Caco-2 (cell line): ENCODE measurements at regions of chr11 and their contacts with region 1.

Region 1: GRCh38 chr11:48172818-48173609 is 43.6 kb upstream of the OR4B1 start:
- DNase-seq: peak; percentile 70 to 82
- H3K4me3 ChIP-seq: no peak overlapping the region
- H3K4me3 Mint-ChIP-seq: no peak overlapping the region
- H3K27ac Mint-ChIP-seq: no peak overlapping the region
- H3K4me1 ChIP-seq: no peaks in the 10 kb centered on the region
- H3K4me1 Mint-ChIP-seq: no peaks in the 10 kb centered on the region
- H3K27me3 ChIP-seq: no peaks in the 10 kb centered on the region
- H3K27me3 Mint-ChIP-seq: peaks cover 3% of the 10 kb centered on the region
- CTCF ChIP-seq: peak; percentile 96 to 97

Region 2: DNA sequence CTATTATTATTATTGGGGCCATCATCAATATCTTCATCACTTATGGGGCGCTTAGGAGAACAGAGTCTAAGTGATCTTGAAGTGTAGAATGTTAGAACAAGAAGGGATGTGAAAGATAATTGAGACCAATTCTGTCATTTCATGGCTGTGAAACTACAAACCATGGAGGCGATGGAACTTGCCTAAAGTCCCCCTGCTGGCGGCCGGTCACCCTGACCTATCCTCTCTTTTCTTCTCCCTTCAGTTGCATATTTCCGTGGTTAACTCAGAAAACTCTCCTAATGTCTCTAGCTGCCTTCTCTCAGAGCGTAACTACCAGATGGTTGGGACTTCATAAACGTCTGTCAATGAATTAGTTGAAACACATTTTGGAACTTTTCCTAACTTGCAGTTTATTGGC is 37.0 kb after region 1 on chr11:
- CTCF ChIA-PET with region 1: no interaction called
- POLR2A ChIA-PET with region 1: no interaction called
- intact Hi-C with region 1: loop called (anchors 1 kb)
- DNase-seq: peak in 1 of 2 experiments; percentile 42
- H3K4me3 ChIP-seq: no peak overlapping the region
- H3K4me3 Mint-ChIP-seq: no peak overlapping the region
- H3K27ac Mint-ChIP-seq: no peak overlapping the region
- H3K4me1 ChIP-seq: no peaks in the 10 kb centered on the region
- H3K4me1 Mint-ChIP-seq: no peaks in the 10 kb centered on the region
- H3K27me3 ChIP-seq: no peaks in the 10 kb centered on the region
- H3K27me3 Mint-ChIP-seq: peaks cover 4% of the 10 kb centered on the region
- CTCF ChIP-seq: peak; percentile 38 to 52

Region 3: DNA sequence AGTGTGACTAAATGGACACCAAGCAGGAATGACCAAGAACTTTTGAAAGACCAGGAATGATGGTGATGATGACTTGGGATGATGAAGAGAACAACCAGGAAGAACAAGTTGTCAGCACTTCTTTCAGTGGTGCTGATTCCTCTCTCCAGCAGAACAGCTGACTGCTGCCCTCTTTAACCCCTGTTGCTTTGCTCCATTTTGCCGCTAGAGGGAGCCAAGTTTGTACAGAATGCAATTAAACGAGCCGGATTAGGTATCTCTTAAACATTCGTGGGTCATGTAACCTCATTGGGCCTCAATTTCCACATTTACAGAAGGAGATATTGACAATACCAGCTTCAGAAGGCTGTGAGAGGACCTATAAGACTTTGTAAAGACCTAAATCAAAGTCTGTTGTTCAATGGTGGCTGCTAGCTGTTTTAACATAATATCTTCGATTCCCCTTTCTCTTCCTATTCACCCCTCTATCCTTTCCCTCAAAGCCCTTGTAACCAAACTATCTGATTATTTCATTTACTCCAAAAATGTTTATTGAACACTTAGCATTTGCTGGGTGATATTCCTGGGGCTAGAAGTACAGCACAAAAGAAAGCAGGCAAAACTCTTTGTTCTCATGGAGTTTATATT is 134.9 kb after region 1 on chr11:
- CTCF ChIA-PET with region 1: no interaction called
- POLR2A ChIA-PET with region 1: no interaction called
- intact Hi-C with region 1: loop called (anchors 1 kb)
- DNase-seq: peak; percentile 63 to 78
- H3K4me3 ChIP-seq: no peak overlapping the region
- H3K4me3 Mint-ChIP-seq: no peak overlapping the region
- H3K27ac Mint-ChIP-seq: no peak overlapping the region
- H3K4me1 ChIP-seq: no peaks in the 10 kb centered on the region
- H3K4me1 Mint-ChIP-seq: no peaks in the 10 kb centered on the region
- H3K27me3 ChIP-seq: no peaks in the 10 kb centered on the region
- H3K27me3 Mint-ChIP-seq: no peaks in the 10 kb centered on the region
- CTCF ChIP-seq: peak; percentile 85 to 92

Region 4: DNA sequence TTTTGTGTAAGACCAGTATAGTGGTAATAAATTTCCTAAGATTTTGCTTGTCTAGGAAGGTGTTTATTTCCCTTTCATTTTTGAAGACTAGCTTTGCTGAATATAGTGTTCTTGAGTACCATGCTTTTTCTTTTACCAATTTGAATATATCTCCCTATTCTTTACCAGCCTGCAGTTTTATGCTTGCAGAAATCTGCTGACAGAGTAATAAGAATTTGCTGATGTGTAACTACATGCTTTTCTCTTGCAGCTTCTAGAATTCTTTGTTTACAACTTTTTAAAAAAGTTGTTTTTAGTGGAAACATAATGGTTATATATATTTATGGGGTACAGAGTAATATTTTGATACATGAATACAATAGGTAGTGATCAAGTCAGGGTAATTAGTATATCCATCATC is 1360.2 kb after region 1 on chr11:
- CTCF ChIA-PET with region 1: no interaction called
- POLR2A ChIA-PET with region 1: no interaction called
- intact Hi-C with region 1: loop called (anchors 10 kb)
- DNase-seq: no peak
- H3K4me3 ChIP-seq: no peak overlapping the region
- H3K4me3 Mint-ChIP-seq: no peak overlapping the region
- H3K27ac Mint-ChIP-seq: no peak overlapping the region
- H3K4me1 ChIP-seq: no peaks in the 10 kb centered on the region
- H3K4me1 Mint-ChIP-seq: no peaks in the 10 kb centered on the region
- H3K27me3 ChIP-seq: no peaks in the 10 kb centered on the region
- H3K27me3 Mint-ChIP-seq: no peaks in the 10 kb centered on the region
- CTCF ChIP-seq: no peak